GM18951 (cell line): ENCODE measurements at regions of chr5 and their contacts with region 1.

Region 1: DNA sequence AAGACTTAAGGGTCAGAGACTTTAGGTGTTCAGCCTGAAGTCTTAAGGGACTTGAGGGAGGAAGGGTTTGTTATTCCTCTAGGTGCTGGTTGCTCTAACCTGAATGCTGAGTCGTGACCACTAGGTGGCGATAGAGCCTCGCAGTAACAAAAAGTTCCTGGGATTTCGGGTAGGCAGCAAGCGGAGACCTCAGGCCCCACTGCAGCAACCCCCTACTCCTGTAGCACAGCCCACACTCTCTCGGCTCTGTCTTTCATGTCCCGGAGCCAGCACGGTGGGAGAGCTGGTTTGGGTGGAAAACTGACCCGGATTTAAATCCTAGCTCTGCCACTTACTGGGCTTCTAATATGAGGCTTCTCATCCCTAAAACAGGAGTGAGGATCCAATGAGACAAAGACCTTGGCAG is 100.3 kb upstream of the PANK3 start:
- POLR2A ChIP-seq: no peak

Region 2: DNA sequence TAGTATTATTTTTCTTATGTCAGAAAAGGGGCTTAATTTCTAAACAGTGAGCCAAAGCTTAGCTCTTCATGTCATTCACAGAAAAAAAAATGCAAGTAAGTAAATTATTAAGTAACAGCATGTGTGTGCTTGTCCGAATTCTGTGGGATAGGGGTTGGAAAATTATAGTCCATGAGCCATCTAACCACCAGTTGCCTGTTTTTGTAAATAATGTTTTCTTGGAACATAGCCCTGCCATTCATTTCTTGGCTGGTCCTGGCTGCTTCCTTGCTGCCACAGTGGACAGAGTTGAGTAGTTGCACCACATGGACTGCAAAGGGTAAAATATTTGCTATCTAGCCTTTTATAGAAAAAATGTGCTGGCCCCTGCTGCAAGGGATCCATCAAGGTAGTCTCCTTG is 901.8 kb before region 1 on chr5:
- in situ Hi-C with region 1: no loop called
- POLR2A ChIP-seq: no peak

Region 3: DNA sequence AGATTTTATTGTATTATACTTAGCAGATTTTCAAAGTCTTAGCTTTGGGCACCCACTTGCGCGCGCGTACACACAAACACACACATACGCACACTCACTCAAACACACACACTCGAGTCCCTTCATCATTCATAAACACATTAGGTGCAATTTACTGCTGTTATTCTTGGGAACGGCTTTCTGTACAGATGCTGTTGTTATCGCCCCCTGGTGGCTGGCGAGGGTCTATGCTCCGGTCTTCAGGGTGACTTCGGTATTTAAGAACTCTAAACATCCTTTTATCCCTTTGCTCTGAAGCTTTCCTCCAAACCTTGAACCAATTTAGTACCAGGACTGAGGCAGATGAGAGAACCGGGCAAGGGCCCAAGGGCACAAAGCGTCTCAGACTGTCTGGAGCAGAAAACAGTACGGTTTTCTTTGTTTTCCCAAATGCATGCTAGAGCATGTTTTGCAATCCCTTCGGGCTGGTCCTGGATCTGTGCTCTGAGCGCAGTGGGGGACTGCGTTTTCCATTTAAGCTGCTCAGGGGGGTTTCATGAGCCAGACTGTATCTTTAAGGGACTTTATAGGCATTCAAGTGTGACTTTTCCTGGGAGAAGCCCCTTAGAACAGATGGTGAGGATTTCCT is 623.1 kb after region 1 on chr5:
- in situ Hi-C with region 1: loop called (anchors 25 kb)
- POLR2A ChIP-seq: no peak